CD14-positive monocyte (primary cell): ENCODE measurements at regions of chr4 and their contacts with region 1.

Region 1: DNA sequence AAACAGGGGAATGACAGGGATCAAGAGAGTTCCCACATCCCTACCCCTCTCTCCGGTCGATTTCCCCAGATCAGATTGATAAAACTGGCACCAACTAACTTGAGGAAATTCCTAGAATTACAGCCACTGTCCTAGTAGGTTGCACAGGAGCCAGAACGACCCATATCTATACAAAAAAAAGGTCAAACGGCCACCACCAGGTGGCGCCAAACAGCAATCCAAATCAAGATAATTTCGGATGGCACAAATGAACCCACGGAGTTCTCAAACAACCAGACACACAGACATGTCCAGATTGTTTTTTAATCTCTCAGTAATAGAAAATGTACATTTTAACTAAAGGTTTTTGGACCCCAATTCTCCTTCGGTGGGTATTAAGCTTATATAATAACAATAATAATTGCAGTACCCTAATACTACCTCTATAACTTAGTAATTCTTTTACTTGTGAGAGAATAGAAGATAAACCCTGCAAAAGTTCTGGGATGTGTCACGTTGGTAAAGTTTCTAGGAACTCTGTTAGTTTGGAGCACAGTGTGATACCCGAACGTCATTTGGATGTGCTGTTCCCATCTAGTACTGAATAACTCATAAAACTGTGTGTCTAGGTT is 212.6 kb downstream of the SPOCK3 start:
- DNase-seq: peak; percentile 26 to 40 (median 39)
- H3K4me3 ChIP-seq: no peak overlapping the region
- H3K4me3 Mint-ChIP-seq: no peak overlapping the region
- H3K27ac ChIP-seq: no peak overlapping the region
- H3K27ac Mint-ChIP-seq: no peak overlapping the region
- H3K4me1 ChIP-seq: no peaks in the 10 kb centered on the region
- H3K4me1 Mint-ChIP-seq: no peaks in the 10 kb centered on the region
- H3K27me3 ChIP-seq: no peaks in the 10 kb centered on the region
- H3K27me3 Mint-ChIP-seq: peaks cover 0 to 3% (median 2%) of the 10 kb centered on the region in 3 donors
- CTCF ChIP-seq: peak; percentile 91

Region 2: DNA sequence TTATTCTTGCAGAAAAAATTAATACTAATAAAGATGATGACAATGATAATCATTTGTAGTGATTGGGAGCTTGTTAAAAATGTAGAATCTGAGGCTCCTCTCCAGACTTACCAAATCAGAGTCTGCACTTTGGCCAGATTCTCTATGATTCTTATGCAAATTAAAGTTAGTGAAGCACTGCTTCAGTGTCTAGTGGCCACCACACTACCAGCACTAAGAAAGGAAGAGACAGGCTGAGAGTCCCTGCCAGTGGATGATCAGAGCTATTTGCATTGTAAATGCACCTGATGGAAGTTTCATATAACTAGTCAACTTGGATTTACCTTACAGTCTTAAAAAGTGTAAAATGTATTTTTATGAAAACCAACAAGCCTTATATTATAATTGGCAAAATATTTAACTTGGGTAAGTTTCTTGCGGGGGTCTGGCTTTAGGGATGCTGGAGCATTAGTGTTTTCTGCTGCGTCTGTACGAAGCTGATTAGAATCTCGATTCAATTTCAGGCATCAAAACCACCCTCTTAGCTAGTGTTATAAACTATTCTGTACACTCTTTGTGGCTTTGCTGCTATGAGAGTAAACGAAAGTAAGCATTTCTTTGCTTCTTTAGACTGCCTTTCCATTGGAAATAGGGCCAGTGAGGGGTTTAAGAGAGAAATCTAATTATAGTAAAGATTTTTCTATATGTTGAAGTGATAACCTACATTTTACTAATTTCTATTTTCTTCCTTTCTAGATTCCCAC is 1034.5 kb before region 1 on chr4:
- intact Hi-C with region 1: no loop called
- DNase-seq: no peak
- H3K4me3 ChIP-seq: no peak overlapping the region
- H3K4me3 Mint-ChIP-seq: no peak overlapping the region
- H3K27ac ChIP-seq: no peak overlapping the region
- H3K27ac Mint-ChIP-seq: no peak overlapping the region
- H3K4me1 ChIP-seq: no peaks in the 10 kb centered on the region
- H3K4me1 Mint-ChIP-seq: no peaks in the 10 kb centered on the region
- H3K27me3 ChIP-seq: no peaks in the 10 kb centered on the region
- H3K27me3 Mint-ChIP-seq: no peaks in the 10 kb centered on the region
- CTCF ChIP-seq: no peak

Region 3: GRCh38 chr4:166882221-166882620 is 139.4 kb before region 1 on chr4:
- intact Hi-C with region 1: no loop called
- DNase-seq: no peak
- H3K4me3 ChIP-seq: no peak overlapping the region
- H3K4me3 Mint-ChIP-seq: no peak overlapping the region
- H3K27ac ChIP-seq: no peak overlapping the region
- H3K27ac Mint-ChIP-seq: no peak overlapping the region
- H3K4me1 ChIP-seq: no peaks in the 10 kb centered on the region
- H3K4me1 Mint-ChIP-seq: no peaks in the 10 kb centered on the region
- H3K27me3 ChIP-seq: no peaks in the 10 kb centered on the region
- H3K27me3 Mint-ChIP-seq: no peaks in the 10 kb centered on the region
- CTCF ChIP-seq: no peak

Region 4: DNA sequence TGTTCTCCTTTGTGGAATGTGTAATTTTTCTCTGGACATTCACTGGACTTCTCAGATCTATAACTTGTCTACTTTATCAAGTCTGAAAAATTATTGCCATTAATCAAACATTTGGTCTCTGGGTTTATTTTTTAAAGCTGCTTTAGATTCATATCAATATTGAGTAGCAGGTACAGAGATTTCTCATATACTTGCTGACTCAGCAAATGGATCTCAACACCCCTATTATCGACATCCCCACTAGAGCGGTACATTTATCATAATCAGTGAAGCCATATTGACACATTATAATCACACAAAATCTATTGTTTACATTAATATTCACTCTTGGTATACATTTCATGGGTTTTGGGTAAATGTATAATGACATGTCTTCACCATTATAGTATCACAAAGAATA is 56.1 kb before region 1 on chr4:
- intact Hi-C with region 1: no loop called
- DNase-seq: no peak
- H3K4me3 ChIP-seq: no peak overlapping the region
- H3K4me3 Mint-ChIP-seq: no peak overlapping the region
- H3K27ac ChIP-seq: no peak overlapping the region
- H3K27ac Mint-ChIP-seq: no peak overlapping the region
- H3K4me1 ChIP-seq: no peaks in the 10 kb centered on the region
- H3K4me1 Mint-ChIP-seq: no peaks in the 10 kb centered on the region
- H3K27me3 ChIP-seq: no peaks in the 10 kb centered on the region
- H3K27me3 Mint-ChIP-seq: no peaks in the 10 kb centered on the region
- CTCF ChIP-seq: no peak

Region 5: GRCh38 chr4:167088115-167088514 is 66.5 kb after region 1 on chr4:
- intact Hi-C with region 1: no loop called
- DNase-seq: no peak
- H3K4me3 ChIP-seq: no peak overlapping the region
- H3K4me3 Mint-ChIP-seq: no peak overlapping the region
- H3K27ac ChIP-seq: no peak overlapping the region
- H3K27ac Mint-ChIP-seq: no peak overlapping the region
- H3K4me1 ChIP-seq: no peaks in the 10 kb centered on the region
- H3K4me1 Mint-ChIP-seq: peaks cover 2% of the 10 kb centered on the region
- H3K27me3 ChIP-seq: no peaks in the 10 kb centered on the region
- H3K27me3 Mint-ChIP-seq: no peaks in the 10 kb centered on the region
- CTCF ChIP-seq: no peak

Region 6: DNA sequence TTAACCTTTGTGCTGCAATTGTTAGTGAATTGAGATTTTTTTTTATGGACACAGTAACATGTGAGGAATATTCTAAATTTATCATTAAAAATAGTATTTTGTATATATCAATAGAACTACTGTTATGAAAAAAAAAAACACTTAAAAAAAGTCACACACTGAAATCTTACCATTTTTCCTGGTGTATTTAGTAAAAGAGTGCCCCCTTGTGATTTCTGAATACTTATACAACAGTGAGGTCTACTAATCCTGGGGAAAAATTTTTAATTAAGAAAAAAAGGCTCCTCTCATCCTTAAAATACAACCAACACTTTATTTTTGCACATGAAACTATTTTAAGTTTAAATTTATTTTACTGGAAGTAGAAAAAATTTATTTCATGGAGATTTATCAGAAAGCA is 269.0 kb after region 1 on chr4:
- intact Hi-C with region 1: loop called (anchors 5 kb)
- DNase-seq: peak in 1 of 3 donors; percentile 16
- H3K4me3 ChIP-seq: no peak overlapping the region
- H3K4me3 Mint-ChIP-seq: no peak overlapping the region
- H3K27ac ChIP-seq: no peak overlapping the region
- H3K27ac Mint-ChIP-seq: no peak overlapping the region
- H3K4me1 ChIP-seq: no peaks in the 10 kb centered on the region
- H3K4me1 Mint-ChIP-seq: no peaks in the 10 kb centered on the region
- H3K27me3 ChIP-seq: no peaks in the 10 kb centered on the region
- H3K27me3 Mint-ChIP-seq: no peaks in the 10 kb centered on the region
- CTCF ChIP-seq: peak; percentile 65

Region 7: DNA sequence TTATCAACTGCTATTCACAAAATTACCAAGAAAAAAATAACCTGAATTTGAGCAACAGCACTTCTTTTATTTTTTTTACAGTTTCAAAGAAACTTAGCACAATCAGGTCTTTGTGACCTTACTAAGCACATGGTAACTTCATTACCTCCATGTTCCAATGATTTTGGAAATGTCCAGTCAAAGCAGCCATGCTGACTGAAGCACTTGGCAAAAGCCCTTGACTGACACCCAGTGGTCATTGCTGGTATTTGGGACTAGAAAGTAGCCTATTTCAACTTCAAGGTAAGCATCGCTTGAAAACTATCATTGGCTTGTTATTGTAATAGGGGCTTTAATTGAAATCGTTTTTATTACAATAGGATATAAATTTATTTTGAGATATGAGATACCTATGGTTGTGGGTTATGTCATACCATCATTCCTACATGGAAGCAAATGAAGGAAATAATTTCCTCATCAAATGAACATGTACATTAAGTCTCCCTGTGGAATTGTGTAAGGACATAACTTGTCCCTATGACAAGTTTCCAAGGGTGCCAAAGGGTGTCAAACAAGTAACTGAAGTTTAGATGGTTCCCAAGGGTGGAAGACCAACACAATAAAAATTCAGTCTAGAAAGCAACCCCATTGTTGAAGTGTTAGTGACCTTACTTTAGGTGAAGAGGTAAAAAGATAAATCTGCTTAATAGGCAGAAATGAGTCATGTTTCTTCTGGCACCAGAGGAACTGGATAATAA is 1055.5 kb after region 1 on chr4:
- intact Hi-C with region 1: loop called (anchors 5 to 10 kb)
- DNase-seq: peak; percentile 0 to 7 (median 4)
- H3K4me3 ChIP-seq: no peak overlapping the region
- H3K4me3 Mint-ChIP-seq: no peak overlapping the region
- H3K27ac ChIP-seq: no peak overlapping the region
- H3K27ac Mint-ChIP-seq: no peak overlapping the region
- H3K4me1 ChIP-seq: no peaks in the 10 kb centered on the region
- H3K4me1 Mint-ChIP-seq: no peaks in the 10 kb centered on the region
- H3K27me3 ChIP-seq: no peaks in the 10 kb centered on the region
- H3K27me3 Mint-ChIP-seq: peaks cover 0 to under 1% (median 0%) of the 10 kb centered on the region in 3 donors
- CTCF ChIP-seq: peak; percentile 77

Region 8: GRCh38 chr4:168153596-168154440 is 1132.2 kb after region 1 on chr4:
- intact Hi-C with region 1: loop called in 1 of 2 experiments (anchors 5 kb)
- DNase-seq: peak; percentile 25 to 30 (median 26)
- H3K4me3 ChIP-seq: no peak overlapping the region
- H3K4me3 Mint-ChIP-seq: peak overlapping the region; percentile 6 to 50
- H3K27ac ChIP-seq: no peak overlapping the region
- H3K27ac Mint-ChIP-seq: no peak overlapping the region
- H3K4me1 ChIP-seq: no peaks in the 10 kb centered on the region
- H3K4me1 Mint-ChIP-seq: peaks cover 5% of the 10 kb centered on the region
- H3K27me3 ChIP-seq: no peaks in the 10 kb centered on the region
- H3K27me3 Mint-ChIP-seq: no peaks in the 10 kb centered on the region
- CTCF ChIP-seq: peak; percentile 76